HEK293 (cell line): ENCODE measurements at regions of chr4 and their contacts with region 1.

Region 1: DNA sequence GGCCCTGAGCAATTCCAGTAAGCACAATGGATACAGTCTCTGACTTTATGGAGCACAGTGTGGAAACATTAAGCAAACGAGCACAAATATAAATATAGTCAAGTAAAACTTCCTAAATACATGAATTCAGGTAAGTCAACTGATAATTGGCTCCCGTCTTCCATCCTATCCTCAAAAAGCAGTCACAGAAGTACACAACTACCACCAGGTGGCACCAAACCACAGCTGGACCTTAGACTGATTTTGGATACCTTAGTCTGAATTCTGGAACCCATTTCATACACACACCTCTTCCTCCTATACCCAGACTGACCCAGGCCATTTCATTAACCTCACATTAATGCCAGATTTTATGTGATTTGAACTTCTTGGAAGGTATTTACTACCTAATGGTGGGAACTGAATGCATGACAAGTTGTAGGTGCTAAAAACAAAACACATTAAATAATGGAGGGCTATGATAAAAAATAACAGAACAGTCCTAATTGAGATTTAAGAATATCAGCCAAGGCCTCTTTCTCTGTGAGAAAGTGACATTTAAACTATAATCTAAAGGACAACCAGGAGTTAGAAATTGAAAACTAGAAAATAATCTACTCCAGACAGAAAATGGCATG is 77.5 kb downstream of the ELF2 start:
- H3K4me3 ChIP-seq: no peak overlapping the region
- H3K27ac ChIP-seq: no peak overlapping the region
- H3K4me1 ChIP-seq: no peaks in the 10 kb centered on the region
- CTCF ChIP-seq: 0 out of 2 replicates have a peak, but pooled peaks have one; percentile 47

Region 2: DNA sequence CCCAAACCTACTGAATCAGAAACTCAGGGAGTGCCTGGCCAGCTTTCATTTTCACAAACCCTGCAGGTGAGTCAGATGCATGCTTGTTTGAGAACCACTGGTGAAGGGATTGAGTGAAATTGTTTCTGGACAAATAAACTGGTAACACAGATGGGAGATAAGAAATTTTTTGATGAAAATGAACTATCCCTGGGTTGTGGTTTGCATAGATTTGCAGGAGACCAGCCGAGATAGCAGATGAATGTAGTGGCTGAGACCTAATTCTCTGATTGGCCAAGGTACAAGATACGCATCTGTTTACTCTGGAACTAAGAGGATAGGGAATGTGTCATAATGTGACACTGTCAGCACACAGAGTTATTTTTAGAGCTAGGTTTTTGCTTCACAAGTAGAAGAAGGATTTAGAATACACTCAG is 201.7 kb before region 1 on chr4:
- CTCF ChIA-PET with region 1: no interaction called
- POLR2A ChIA-PET with region 1: no interaction called
- H3K4me3 ChIP-seq: no peak overlapping the region
- H3K27ac ChIP-seq: no peak overlapping the region
- H3K4me1 ChIP-seq: peaks cover 9% of the 10 kb centered on the region; the same call in 1 of the 2 replicates
- CTCF ChIP-seq: no peak

Region 3: DNA sequence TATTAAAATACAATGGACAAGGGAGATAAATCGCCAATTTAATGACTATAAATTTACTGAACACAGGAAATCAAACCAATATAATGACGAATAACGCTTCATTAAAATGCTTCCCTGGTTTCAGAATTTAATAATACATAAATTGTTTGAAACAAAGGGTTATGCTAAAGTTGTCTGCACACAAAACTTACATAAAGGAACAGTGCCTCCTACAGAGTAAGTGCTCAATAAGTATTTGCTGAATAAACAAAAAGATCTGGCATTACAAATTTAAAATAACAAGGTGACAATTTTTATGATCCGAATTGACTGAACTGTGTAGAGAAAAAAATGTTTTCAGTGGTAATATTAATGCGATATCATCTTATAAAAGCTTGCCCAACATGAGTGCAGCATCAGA is 14.3 kb before region 1 on chr4:
- CTCF ChIA-PET with region 1: interaction called, 11 read pairs
- POLR2A ChIA-PET with region 1: no interaction called
- H3K4me3 ChIP-seq: peak overlapping the region; percentile 85; the same call in 1 of the 2 replicates
- H3K27ac ChIP-seq: peak overlapping the region; percentile 91; the same call in 1 of the 2 replicates
- H3K4me1 ChIP-seq: no peaks in the 10 kb centered on the region; the same call in 1 of the 2 replicates
- CTCF ChIP-seq: no peak

Region 4: DNA sequence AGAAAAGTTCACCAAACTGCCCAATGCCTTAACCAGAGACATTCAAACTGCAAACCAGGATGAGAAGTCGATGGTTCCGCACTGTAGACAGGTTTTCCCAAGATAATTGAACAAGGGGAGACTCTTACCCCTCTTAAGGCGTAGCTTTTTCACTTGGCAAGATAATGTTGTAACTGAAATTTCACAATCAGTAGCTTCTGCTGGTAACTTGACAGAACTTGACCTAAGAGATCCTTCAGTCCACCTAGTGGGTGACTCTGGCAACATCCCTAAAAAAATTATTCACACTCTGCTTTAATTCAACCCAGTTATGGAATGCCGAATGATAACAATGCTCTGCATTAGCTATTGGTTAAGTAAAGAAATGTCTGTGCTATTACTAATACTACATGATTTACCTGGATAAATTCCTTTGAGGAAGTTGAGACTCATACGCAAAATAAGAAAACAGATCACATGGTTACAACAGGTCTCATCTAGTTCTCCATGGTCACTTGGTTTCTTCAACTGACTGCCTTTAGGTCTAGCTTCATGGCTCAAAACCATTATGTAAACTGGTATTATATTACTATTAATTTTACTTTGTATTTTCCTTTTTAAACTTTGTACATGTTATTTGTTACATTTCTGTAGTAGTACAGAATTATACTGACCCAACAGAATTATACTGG is 68.4 kb after region 1 on chr4:
- CTCF ChIA-PET with region 1: interaction called, 15 read pairs
- POLR2A ChIA-PET with region 1: no interaction called
- H3K4me3 ChIP-seq: no peak overlapping the region
- H3K27ac ChIP-seq: no peak overlapping the region
- H3K4me1 ChIP-seq: peaks cover 2% of the 10 kb centered on the region; the same call in 1 of the 2 replicates
- CTCF ChIP-seq: no peak; the same call in 1 of the 2 replicates

Region 5: DNA sequence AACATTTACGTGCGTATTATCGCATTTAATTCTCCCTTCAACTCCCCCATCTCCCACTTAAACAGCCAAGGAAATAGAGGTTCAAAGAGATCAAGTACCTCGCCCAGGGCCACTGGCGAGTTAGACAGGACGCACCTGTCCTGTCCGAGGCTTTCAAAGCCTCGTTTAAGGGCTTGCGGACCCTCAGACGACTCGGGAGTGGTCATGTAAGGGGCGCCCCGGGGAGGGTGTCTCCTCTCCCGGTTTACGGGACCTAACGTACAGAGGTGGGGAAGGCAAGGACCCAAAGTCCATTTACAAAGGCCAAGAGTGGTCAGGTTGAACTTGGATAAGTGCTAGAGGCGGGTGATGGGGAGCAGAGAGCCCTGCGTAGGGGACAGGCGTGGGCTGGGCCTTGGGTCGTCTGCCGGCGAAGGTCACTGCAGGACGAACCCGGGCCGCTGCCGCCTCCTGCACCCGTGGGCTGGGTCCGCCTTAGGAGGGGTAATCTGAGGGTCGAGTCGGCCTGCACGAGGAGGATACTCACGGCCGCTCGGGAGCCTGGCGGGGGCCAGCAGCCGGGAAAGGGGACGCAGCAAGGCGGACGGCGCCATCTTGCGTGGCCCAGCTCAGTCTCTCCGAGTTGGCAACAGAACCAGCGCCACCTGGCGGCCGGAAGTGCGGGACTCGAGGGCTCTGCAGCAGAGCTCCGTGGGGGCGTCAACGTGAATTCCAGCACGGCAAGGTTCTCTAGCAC is 195.9 kb after region 1 on chr4:
- CTCF ChIA-PET with region 1: interaction called, 14 read pairs
- POLR2A ChIA-PET with region 1: no interaction called
- H3K4me3 ChIP-seq: peak overlapping the region; percentile 86
- H3K27ac ChIP-seq: peak overlapping the region; percentile 71
- H3K4me1 ChIP-seq: no peaks in the 10 kb centered on the region
- CTCF ChIP-seq: peak; percentile 97